Posterior cingulate gyrus (tissue), 11 donors: ENCODE measurements at regions of chr9 and their contacts with region 1.

Region 1: GRCh38 chr9:69971643-69972449 is 71.8 kb upstream of the MAMDC2 start:
- DNase-seq: peak; percentile 38 to 96 (median 74)

Region 2: GRCh38 chr9:69996967-69997366 is 25.1 kb after region 1 on chr9:
- intact Hi-C with region 1: no loop called
- DNase-seq: no peak

Region 3: GRCh38 chr9:70031141-70031545 is 59.3 kb after region 1 on chr9:
- intact Hi-C with region 1: no loop called
- DNase-seq: no peak

Region 4: GRCh38 chr9:70080481-70081119 is 108.8 kb after region 1 on chr9:
- intact Hi-C with region 1: no loop called
- DNase-seq: no peak

Region 5: DNA sequence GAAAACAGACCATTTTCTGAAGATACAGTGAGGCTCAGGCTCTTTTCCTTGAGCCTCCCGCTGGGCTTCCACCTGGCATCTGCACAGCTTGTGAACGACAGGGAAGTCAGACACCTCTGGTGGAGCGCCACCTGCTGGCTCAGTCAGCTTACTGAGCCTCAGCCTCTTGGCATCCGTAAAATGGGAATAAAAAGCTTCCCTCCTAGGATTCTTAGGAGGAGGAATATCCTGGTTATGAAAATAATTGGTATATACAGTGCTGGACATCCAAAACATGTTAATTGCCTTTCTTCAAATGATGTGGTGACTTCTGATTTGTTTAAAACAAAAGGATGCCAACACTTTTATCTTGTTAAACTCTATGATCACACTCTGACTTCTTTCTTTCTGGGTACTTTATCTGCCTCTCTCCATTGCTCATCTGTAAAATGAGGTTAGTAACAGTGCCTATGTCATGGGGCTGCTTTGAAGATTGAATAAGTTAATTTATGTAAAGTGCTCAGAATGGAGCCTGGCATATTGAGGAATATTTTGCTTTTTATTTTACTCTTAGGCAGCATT is 139.3 kb after region 1 on chr9:
- intact Hi-C with region 1: loop called (anchors 1 kb)
- DNase-seq: peak; percentile 22 to 95 (median 72)

Region 6: GRCh38 chr9:70229579-70229978 is 257.7 kb after region 1 on chr9:
- intact Hi-C with region 1: loop called (anchors 5 kb)
- DNase-seq: no peak